ENCODE measurements at regions of chr12 and their contacts with region 1.

Region 1: DNA sequence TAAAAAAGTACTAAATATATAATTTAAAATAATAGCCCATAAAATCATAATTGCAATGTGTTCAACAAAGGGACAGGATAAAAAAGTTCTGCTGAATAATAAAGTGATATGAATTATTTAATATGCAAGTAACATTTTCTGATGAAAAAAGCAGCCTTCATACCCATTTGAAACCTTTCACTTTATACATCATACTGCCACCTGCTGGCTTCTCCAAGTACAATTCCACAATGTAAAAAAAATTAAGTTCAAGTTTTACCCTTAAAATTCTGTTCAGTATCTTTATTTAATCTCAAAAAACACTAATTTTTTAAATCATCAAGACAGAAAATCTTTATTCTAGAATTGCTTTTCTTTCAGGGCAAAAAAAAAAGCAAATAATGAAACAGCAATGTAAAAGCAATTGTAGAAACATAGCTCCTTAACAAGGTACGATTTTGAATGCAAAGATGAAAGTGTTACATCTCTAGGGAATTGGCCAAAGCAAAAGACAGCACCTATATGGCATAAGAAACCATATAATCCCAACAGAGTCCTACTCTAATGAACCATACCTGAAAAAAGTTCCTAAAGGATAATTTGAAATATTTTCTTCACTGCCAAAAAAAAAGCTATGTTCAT is 15.0 kb downstream of the MDM1 start:
- DNase-seq: peak; percentile 53
- H3K4me3 Mint-ChIP-seq: no peak overlapping the region
- H3K27ac Mint-ChIP-seq: no peak overlapping the region
- H3K4me1 Mint-ChIP-seq: no peaks in the 10 kb centered on the region
- H3K27me3 Mint-ChIP-seq: no peaks in the 10 kb centered on the region
- CTCF ChIP-seq: peak; percentile 62

Region 2: DNA sequence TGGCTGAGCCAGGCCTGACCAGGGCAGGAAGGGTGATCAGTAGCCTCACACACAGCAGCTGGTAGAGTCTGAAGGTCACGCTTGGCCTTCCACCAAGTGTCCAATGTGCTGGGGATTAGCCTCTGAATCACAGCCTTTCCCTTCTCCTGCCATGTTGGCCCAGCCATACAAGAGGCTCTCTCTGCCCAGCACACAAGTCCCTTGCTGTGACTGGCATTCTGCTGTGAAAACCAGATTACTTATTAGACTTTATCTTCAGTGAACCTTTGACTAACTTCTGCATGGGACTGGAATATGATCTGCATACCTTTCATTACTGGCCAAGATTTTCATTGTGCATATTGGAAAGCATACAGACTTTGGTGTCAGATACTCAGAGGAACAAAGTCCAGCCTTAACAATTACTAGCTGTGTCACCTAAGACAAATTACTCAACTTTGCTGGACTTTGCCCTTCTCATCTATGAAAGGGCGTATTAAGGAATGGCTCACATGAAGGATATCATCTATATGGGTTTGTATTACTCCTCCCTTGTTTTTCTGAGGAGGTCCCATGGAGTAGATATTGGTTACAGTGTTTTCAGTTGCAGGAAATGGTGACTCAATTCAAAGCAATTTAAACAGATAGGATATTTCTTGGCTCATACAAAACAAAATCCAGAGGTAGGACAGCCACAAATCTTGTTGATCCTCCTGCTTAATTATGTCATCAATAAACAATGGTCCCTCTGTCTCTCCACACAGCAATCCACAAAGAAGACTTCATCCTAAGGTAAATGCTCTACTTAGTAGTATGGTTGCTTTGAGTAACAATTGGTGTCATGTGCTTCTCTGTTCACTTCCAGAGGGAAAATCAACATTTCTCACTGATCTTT is 569.1 kb before region 1 on chr12:
- CTCF ChIA-PET with region 1: no interaction called
- POLR2A ChIA-PET with region 1: no interaction called
- intact Hi-C with region 1: no loop called
- DNase-seq: peak; percentile 13
- H3K4me3 Mint-ChIP-seq: no peak overlapping the region
- H3K27ac Mint-ChIP-seq: no peak overlapping the region
- H3K4me1 Mint-ChIP-seq: peaks cover 15% of the 10 kb centered on the region
- H3K27me3 Mint-ChIP-seq: no peaks in the 10 kb centered on the region
- CTCF ChIP-seq: no peak

Region 3: DNA sequence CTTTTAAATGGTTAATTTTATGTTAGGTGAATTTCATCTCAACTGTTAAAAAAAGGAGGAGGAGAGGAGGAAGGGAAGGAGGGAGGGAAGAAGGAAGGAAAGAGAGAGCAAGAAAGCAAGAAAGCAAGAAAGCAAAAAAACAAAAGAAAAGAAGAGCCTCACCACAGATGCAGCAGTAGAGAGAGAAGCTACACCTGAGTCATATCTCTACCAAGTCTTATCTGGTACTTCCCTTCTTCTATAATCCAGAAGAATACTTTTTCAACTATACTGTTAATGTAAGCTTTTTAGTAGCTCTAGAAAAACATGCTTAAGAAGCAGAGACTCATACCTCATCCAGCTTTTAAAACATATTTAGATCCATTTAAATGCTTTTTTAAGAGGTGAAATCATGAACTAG is 85.9 kb before region 1 on chr12:
- CTCF ChIA-PET with region 1: interaction called, 151 read pairs
- POLR2A ChIA-PET with region 1: no interaction called
- intact Hi-C with region 1: no loop called
- DNase-seq: no peak
- H3K4me3 Mint-ChIP-seq: no peak overlapping the region
- H3K27ac Mint-ChIP-seq: no peak overlapping the region
- H3K4me1 Mint-ChIP-seq: peaks cover 5% of the 10 kb centered on the region
- H3K27me3 Mint-ChIP-seq: no peaks in the 10 kb centered on the region
- CTCF ChIP-seq: no peak

Region 4: GRCh38 chr12:68236421-68237059 is 80.6 kb before region 1 on chr12:
- CTCF ChIA-PET with region 1: interaction called, 13 read pairs
- POLR2A ChIA-PET with region 1: no interaction called
- intact Hi-C with region 1: loop called (anchors 1 kb)
- DNase-seq: peak; percentile 48
- H3K4me3 Mint-ChIP-seq: peak overlapping the region; percentile 61
- H3K27ac Mint-ChIP-seq: peak overlapping the region; percentile 50
- H3K4me1 Mint-ChIP-seq: peaks cover 26% of the 10 kb centered on the region
- H3K27me3 Mint-ChIP-seq: no peaks in the 10 kb centered on the region
- CTCF ChIP-seq: no peak

Region 5: DNA sequence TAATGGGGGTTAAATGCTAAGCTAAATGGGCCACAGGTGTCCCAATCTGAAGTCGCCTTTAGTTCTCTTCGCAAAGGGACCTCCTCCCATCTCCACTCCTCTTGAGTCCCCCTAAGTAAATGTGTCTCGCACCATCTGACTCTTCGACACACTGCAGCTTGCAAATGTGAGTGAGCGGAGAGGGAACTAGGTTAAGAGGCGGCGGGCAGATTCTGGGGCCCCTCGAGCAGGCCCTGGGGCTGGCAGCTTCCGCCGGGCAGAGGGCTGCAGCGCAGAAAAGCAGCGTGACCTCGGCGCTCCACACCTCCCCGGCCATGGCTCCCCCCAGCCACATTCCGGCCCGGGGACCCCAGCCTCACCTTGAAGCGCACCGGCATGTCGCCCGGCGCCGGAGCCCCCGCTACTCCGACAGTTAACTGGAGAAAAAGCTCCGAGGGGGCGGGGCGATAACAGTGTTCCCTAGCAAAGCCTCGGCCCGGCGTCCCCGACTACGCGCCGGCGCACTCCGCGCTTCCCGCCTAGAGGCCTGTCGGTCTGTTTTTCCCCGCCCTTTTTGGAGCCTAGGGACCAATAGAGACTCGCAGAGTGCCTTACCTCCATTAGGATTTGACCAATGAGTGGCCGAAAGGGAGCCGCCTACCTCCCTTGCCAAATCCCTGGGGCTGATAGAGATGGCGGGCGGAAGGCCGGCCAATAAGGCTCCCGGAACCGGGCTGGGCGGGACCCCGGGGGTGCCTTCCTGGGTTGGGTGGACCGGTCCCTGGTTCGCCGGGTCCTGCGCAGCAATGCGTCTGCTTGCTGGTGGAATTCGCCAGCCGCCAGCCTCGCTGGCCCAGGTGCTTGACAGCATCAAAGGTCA is 14.9 kb after region 1 on chr12 and contains the start of gene MDM1:
- CTCF ChIA-PET with region 1: interaction called, 19 read pairs
- POLR2A ChIA-PET with region 1: interaction called, 12 read pairs
- intact Hi-C with region 1: no loop called
- DNase-seq: peak; percentile 99
- H3K4me3 Mint-ChIP-seq: peak within 1 kb of the TSS; percentile 83
- H3K27ac Mint-ChIP-seq: peak within 1 kb of the TSS; percentile 46
- H3K4me1 Mint-ChIP-seq: peaks cover 40% of the 10 kb centered on the region
- H3K27me3 Mint-ChIP-seq: no peaks in the 10 kb centered on the region
- CTCF ChIP-seq: no peak
- total RNA-seq, gene MDM1: 11.8 and 17.5 TPM in 2 replicates

Region 6: DNA sequence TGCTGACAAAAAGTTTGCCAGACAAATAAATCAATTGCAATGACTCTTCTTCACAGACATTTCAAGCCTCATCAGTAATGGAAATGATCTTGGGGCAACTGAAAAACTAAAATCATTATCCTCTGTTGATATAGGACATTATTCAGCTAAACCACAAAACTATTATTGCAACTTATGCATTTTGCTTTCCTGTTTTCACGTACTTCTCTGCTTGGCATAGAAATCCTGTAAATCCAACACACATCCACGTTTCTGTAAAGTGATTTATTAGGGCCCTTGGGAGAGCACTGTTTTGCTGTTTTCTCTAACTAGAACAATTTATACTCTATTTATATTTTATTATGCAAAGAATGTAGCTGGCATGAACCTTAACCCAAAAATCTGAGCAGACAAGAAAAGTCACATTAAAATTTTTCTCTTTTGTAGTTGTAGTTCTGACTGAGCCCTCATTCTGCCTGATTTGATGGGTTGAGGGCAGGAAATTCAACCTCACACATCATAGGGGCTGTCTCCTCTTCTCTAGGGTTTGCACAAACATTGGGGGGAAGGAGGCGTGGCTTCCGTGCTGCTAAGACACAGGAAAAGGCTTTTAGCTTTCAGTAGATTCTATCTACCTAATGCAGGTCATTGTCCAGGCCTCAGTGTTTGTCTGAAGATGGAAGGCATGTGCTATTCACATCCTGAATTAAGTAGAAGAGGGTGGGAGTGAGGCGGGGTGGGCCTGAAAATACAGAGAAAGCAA is 358.1 kb after region 1 on chr12:
- CTCF ChIA-PET with region 1: no interaction called
- POLR2A ChIA-PET with region 1: no interaction called
- intact Hi-C with region 1: no loop called
- DNase-seq: no peak
- H3K4me3 Mint-ChIP-seq: no peak overlapping the region
- H3K27ac Mint-ChIP-seq: no peak overlapping the region
- H3K4me1 Mint-ChIP-seq: peaks cover 6% of the 10 kb centered on the region
- H3K27me3 Mint-ChIP-seq: no peaks in the 10 kb centered on the region
- CTCF ChIP-seq: no peak

Measured in MCF 10A (cell line).